ENCODE measurements at regions of chr6 and their contacts with region 1.

Region 1: GRCh38 chr6:124076336-124077048 is 272.8 kb downstream of the NKAIN2 start:
- DNase-seq: no peak
- H3K4me3 ChIP-seq: no peak overlapping the region
- H3K27ac ChIP-seq: no peak overlapping the region
- H3K4me1 ChIP-seq: no peaks in the 10 kb centered on the region
- H3K27me3 ChIP-seq: no peaks in the 10 kb centered on the region
- CTCF ChIP-seq: no peak
- EP300 ChIP-seq: no peak
- POLR2A ChIP-seq: no peak

Region 2: DNA sequence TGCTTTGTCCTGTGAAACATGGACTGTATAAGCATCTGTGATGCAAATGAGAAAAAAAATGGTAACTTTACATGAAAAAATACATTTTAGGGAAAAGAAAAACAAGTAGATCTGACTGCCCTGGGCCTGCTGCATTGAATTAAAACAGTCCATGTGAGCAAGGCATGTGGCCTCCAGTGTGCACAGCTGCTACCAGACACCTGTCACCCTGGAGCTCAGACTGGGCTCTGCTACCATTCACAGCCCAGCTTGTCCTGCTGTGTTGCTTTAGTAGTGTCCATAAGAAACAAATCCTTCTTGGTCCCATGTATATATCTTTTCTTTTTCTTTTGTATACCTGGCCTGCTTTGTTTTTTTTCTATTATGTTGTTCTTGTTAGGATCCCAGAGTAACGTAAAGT is 43.1 kb after region 1 on chr6:
- in situ Hi-C with region 1: no loop called
- intact Hi-C with region 1: loop called (anchors 1 kb)
- DNase-seq: no peak
- H3K4me3 ChIP-seq: no peak overlapping the region
- H3K27ac ChIP-seq: no peak overlapping the region
- H3K4me1 ChIP-seq: no peaks in the 10 kb centered on the region
- H3K27me3 ChIP-seq: no peaks in the 10 kb centered on the region
- CTCF ChIP-seq: no peak
- EP300 ChIP-seq: no peak
- POLR2A ChIP-seq: no peak

Measured in transverse colon (tissue), 4 donors.